Activated CD4-positive, alpha-beta T cell treated with anti-CD3 and anti-CD28 coated beads, Interleukin-2, amount 10 ng/mL, durations not matched to agents 24 days and 14 days (primary cell): ENCODE measurements at regions of chr6 and their contacts with region 1.

Region 1: GRCh38 chr6:37207903-37208456 is 38.0 kb downstream of the PIM1 start:
- DNase-seq: peak; percentile 96
- H3K4me3 Mint-ChIP-seq: peak overlapping the region; percentile 57
- H3K27ac Mint-ChIP-seq: peak overlapping the region; percentile 86
- H3K4me1 Mint-ChIP-seq: peaks cover 58% of the 10 kb centered on the region
- H3K27me3 Mint-ChIP-seq: no peaks in the 10 kb centered on the region

Region 2: DNA sequence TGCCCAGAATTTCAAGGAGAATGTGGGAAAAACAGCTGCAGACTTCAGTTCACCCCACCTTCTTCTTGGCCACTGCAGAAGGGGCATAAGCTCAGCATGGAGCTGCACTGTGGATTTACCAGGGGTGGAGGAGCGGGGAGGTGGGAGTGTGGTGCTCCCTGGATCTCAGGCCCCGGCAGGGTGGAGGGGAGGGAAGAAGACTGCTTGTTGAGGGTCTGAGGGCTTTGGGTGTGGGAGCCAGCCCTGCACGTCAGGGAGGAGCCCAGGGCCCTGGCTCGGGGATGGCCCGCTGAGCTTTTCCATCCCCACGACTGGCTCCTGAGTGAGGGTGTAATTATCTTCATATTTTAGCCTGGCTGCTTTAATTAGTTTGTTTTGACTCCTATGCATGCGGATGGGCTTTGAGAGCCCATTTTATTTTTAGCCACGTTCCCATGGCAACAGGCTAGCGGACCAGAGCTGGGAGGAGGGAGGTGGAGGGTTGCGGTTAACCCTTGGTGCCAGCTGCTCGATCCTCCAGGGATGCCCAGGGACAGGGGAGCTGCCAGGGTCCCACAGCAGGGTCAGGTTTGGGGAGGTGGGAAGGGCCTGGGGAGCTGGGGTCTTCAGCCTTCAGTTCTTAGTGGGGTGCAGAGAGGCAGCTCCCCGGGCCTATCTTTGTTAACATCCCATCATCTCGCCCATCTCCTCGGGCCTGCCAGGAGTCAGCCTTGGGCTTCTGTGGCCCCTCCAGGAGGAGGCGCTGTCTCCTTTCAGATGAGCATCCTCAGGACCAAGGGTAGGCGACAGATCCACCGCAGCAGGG is 442.2 kb before region 1 on chr6:
- intact Hi-C with region 1: loop called (anchors 2 kb)
- DNase-seq: peak; percentile 96
- H3K4me3 Mint-ChIP-seq: no peak overlapping the region
- H3K27ac Mint-ChIP-seq: no peak overlapping the region
- H3K4me1 Mint-ChIP-seq: peaks cover 30% of the 10 kb centered on the region
- H3K27me3 Mint-ChIP-seq: no peaks in the 10 kb centered on the region

Region 3: DNA sequence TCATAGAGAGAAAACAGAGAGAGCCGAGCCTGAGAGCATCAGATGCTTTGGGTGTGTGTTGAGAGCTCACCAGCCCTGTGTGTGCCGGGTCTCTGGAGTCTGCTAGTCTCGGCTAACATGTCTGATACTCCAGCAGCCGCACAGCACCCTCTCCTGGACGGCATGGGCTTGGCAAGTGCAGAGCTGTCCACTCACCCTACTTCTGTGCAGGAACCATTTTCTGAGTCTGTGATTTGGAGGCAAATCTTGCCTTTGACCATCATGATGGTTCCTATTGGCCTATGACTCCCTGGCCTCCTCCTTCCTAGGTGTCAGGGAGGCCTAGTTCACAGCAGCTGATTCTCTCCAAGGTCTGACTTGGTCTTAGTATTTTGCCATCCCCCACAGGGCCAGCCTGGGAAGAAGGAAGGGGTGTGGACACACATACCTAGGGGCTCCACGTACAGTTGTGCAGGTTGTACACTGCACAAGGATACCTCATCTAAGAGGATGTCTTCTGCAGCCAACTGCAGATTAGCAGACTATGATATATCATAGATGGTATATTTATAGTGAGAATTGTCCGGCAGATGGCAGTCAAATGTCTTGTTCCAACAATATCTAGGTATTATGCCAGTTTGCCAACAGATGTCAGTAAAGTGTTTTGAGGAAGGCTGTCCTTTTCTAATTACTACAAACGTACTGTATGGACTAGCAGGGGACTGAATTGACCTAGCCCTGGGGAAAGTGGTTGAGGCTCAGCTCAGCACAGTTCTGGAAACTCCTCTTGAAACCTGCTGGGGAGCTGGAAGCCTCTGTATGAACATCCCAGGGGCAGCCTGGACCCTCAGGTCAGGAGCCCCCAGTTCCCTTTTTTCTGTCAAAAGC is 189.5 kb before region 1 on chr6:
- intact Hi-C with region 1: loop called (anchors 1 kb)
- DNase-seq: peak; percentile 97
- H3K4me3 Mint-ChIP-seq: peak overlapping the region; percentile 16
- H3K27ac Mint-ChIP-seq: peak overlapping the region; percentile 85
- H3K4me1 Mint-ChIP-seq: peaks cover 44% of the 10 kb centered on the region
- H3K27me3 Mint-ChIP-seq: no peaks in the 10 kb centered on the region

Region 4: DNA sequence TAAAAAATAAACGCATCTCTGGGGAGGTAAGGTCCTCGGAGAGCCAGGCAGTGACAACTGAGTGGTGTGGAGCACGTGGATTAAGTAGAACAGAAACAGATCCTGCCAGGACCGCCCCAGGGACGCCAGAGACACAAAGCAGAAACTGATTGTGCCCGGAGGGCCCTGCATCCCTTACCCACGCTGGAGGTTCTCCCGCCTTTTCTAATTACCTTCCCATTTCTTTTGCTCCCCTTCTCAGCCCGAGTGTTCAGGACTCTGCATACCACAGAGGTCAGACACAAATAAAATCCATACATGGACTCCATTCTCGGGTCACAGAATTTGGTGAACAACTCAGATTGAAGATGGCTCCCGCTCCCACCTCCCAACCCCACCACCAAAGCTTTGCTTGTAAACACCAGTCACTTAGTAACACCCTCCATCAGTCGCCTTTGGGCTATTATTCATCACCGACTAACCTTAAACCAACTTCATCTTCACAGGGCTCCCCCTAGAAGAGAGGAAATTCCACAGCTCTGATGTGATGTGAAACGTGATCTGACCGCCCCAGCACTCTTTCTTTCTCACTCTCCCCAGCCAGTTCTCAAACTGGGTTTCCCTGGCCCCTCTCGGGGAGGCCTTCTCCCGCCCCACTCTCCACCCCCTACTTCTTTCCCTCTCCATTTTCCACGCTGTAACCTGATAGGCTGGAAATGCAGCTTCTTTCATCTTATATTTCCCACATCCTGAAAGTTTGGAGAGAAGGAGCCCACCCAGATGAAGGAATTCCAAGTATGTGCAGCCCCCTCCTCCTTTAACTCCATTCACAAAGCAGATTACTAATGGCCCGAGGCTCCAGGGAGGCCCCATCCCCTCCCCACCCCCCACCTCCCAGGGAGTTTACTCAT is 70.5 kb before region 1 on chr6:
- intact Hi-C with region 1: loop called (anchors 1 kb)
- DNase-seq: peak; percentile 62
- H3K4me3 Mint-ChIP-seq: peak overlapping the region; percentile 5
- H3K27ac Mint-ChIP-seq: peak overlapping the region; percentile 87
- H3K4me1 Mint-ChIP-seq: peaks cover 35% of the 10 kb centered on the region
- H3K27me3 Mint-ChIP-seq: no peaks in the 10 kb centered on the region

Region 5: GRCh38 chr6:37190159-37190535 is 17.8 kb before region 1 on chr6:
- intact Hi-C with region 1: loop called (anchors 1 kb)
- DNase-seq: peak; percentile 73
- H3K4me3 Mint-ChIP-seq: peak overlapping the region; percentile 58
- H3K27ac Mint-ChIP-seq: peak overlapping the region; percentile 90
- H3K4me1 Mint-ChIP-seq: peaks cover 59% of the 10 kb centered on the region
- H3K27me3 Mint-ChIP-seq: no peaks in the 10 kb centered on the region